Naive thymus-derived CD8-positive, alpha-beta T cell (primary cell): ENCODE measurements at regions of chr6 and their contacts with region 1.

Region 1: GRCh38 chr6:5892669-5893068 is 114.1 kb downstream of the NRN1 start:
- DNase-seq: no peak
- ATAC-seq: no peak
- H3K4me3 Mint-ChIP-seq: peak overlapping the region; percentile 81 to 97 (median 91)
- H3K27ac Mint-ChIP-seq: peak overlapping the region; percentile 66 to 99 (median 96)
- H3K4me1 Mint-ChIP-seq: peaks cover 0 to 12% (median 10%) of the 10 kb centered on the region in 4 donors
- H3K27me3 Mint-ChIP-seq: no peaks in the 10 kb centered on the region

Region 2: DNA sequence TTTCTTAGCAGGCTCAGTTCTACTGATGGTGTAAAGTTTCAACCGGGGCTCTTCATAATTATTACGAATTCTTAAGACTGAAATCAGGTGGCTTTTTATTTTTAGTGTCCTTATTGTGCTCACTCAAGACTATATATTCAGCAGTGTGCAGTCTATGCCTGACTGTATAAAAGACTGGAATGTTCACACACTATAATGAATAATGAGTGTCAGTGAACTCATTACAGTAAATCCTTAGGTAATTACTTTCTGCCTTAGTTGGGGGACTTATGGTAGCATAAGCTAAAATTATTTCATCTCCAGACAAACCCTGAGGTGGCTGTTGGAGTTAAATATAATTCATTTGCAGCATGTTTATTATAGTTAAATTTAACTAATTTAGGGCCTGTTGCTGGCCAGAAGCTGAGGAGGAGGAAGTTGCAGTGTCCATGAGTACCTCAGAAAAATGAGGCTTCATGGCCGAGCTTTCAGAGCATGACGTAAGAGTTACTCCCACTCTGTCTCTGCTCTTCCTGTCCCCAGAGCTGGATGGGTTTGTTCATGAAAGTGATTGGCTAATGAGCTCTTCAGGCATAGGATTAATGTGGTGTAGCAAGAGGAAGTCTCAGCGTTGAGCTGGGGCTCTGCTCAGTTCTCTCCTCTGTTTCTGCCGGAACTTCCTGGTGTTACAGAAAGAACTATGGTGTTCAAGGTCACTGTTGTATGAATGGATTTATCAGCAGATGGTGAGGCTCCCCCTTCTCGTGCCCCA is 221.7 kb before region 1 on chr6:
- POLR2A ChIA-PET with region 1: interaction called, 11 read pairs
- DNase-seq: peak in 4 of 10 donors; percentile 6 to 49 (median 32)
- ATAC-seq: peak; percentile 47 to 87
- H3K4me3 Mint-ChIP-seq: peak overlapping the region; percentile 33 to 79 (median 63)
- H3K27ac Mint-ChIP-seq: peak overlapping the region; percentile 60 to 91 (median 84)
- H3K4me1 Mint-ChIP-seq: peaks cover 20 to 75% (median 63%) of the 10 kb centered on the region in 4 donors
- H3K27me3 Mint-ChIP-seq: no peaks in the 10 kb centered on the region